A549 (cell line): ENCODE measurements at regions of chr19 and their contacts with region 1.

Region 1: DNA sequence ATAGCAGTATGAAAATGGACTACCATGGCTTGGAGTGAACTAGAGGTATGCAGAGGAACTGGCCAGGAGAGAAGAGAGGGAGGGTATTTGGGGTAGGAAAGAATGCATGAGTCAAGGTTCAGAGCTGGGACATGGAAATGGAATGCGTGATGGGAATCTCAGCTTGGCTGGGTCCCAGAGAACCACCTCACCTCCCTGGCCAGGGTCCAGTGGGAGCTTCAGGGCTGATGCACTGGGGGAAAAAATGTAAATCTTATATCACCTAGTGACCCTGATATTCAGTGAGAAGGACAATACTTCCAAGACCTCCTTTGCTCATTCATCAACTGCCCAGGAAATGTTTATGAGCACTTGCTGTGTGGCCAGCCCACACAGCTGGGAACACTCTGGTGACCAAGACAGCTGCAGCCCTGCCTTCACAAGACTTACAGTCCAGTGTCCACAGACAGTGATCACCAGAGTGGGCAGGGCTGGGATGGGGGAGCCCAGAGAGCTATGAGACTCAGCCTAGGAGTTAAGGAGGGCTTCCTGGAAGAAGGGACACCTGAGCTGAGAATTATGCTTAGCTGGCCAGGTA is 12.8 kb downstream of the IGSF23 start:
- DNase-seq: peak; percentile 79 to 93
- ATAC-seq: peak; percentile 90 to 91
- H3K4me3 ChIP-seq: no peak overlapping the region
- H3K27ac ChIP-seq: peak overlapping the region; percentile 81 to 89
- H3K4me1 ChIP-seq: peaks cover 43% of the 10 kb centered on the region
- CTCF ChIP-seq: no peak
- EP300 ChIP-seq: peak; percentile 65 to 74; a peak in 2 of 5 replicates
- POLR2A ChIP-seq: no peak
- RAD21 ChIP-seq: peak; percentile 25 to 34; a peak in 4 of 5 replicates

Region 2: GRCh38 chr19:44643605-44644401 is 17.7 kb after region 1 on chr19 and contains the start of gene PVR:
- CTCF ChIA-PET with region 1: interaction called, 40 read pairs
- POLR2A ChIA-PET with region 1: interaction called, 16 read pairs
- DNase-seq: peak; percentile 91 to 98
- ATAC-seq: peak; percentile 86 to 90
- H3K4me3 ChIP-seq: peak within 1 kb of the TSS; percentile 61
- H3K27ac ChIP-seq: peak within 1 kb of the TSS; percentile 91 to 97
- H3K4me1 ChIP-seq: peaks cover 75% of the 10 kb centered on the region
- CTCF ChIP-seq: no peak
- EP300 ChIP-seq: peak in 1 of 2 experiments; percentile 51; a peak in 1 of 5 replicates
- POLR2A ChIP-seq: peak; percentile 72
- RAD21 ChIP-seq: no peak; a peak in 1 of 5 replicates
- polyA plus RNA-seq, gene PVR: 108 and 110 TPM in 2 replicates